Naive thymus-derived CD4-positive, alpha-beta T cell (primary cell): ENCODE measurements at regions of chr18 and their contacts with region 1.

Region 1: DNA sequence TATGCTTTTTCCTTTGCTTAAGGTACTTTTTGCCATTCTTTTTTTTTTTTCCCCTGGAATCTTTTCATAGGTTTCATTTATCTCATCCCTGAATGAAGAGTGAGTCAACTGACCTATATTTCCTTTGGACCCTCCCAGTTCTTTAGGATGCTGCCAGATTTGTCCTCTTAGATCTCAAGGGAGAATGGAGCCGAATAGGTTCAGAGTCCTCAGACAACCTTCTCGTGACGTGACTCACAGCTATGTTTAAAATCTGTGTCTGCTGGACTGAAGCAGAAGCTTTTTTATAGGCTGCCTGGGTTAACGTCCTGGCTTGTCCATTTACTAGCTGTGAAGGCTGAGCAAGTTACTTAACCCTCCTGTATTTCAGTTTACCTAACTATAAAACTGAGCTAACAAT is 358.6 kb downstream of the DLGAP1 start:
- DNase-seq: no peak
- ATAC-seq: no peak
- H3K4me3 ChIP-seq: no peak overlapping the region
- H3K4me3 Mint-ChIP-seq: no peak overlapping the region
- H3K27ac ChIP-seq: no peak overlapping the region
- H3K27ac Mint-ChIP-seq: no peak overlapping the region
- H3K4me1 ChIP-seq: no peaks in the 10 kb centered on the region
- H3K4me1 Mint-ChIP-seq: peaks cover 0 to 5% (median 0%) of the 10 kb centered on the region in 7 donors
- H3K27me3 ChIP-seq: no peaks in the 10 kb centered on the region
- H3K27me3 Mint-ChIP-seq: peaks cover 0 to 32% (median 10%) of the 10 kb centered on the region in 5 donors

Region 2: GRCh38 chr18:3952031-3952430 is 144.5 kb before region 1 on chr18:
- CTCF ChIA-PET with region 1: no interaction called
- POLR2A ChIA-PET with region 1: no interaction called
- intact Hi-C with region 1: no loop called
- DNase-seq: no peak
- ATAC-seq: no peak
- H3K4me3 ChIP-seq: no peak overlapping the region
- H3K4me3 Mint-ChIP-seq: no peak overlapping the region
- H3K27ac ChIP-seq: no peak overlapping the region
- H3K27ac Mint-ChIP-seq: no peak overlapping the region
- H3K4me1 ChIP-seq: no peaks in the 10 kb centered on the region
- H3K4me1 Mint-ChIP-seq: no peaks in the 10 kb centered on the region
- H3K27me3 ChIP-seq: no peaks in the 10 kb centered on the region
- H3K27me3 Mint-ChIP-seq: peaks cover 0 to 15% (median 7%) of the 10 kb centered on the region in 5 donors

Region 3: GRCh38 chr18:4035521-4035920 is 61.0 kb before region 1 on chr18:
- CTCF ChIA-PET with region 1: no interaction called
- POLR2A ChIA-PET with region 1: no interaction called
- intact Hi-C with region 1: loop called in 1 of 2 experiments (anchors 10 kb)
- DNase-seq: no peak
- ATAC-seq: no peak
- H3K4me3 ChIP-seq: no peak overlapping the region
- H3K4me3 Mint-ChIP-seq: no peak overlapping the region
- H3K27ac ChIP-seq: no peak overlapping the region
- H3K27ac Mint-ChIP-seq: no peak overlapping the region
- H3K4me1 ChIP-seq: no peaks in the 10 kb centered on the region
- H3K4me1 Mint-ChIP-seq: no peaks in the 10 kb centered on the region
- H3K27me3 ChIP-seq: no peaks in the 10 kb centered on the region
- H3K27me3 Mint-ChIP-seq: peaks cover 3 to 28% (median 21%) of the 10 kb centered on the region in 5 donors